CD8-positive, alpha-beta T cell (primary cell): ENCODE measurements at regions of chr1 and their contacts with region 1.

Region 1: DNA sequence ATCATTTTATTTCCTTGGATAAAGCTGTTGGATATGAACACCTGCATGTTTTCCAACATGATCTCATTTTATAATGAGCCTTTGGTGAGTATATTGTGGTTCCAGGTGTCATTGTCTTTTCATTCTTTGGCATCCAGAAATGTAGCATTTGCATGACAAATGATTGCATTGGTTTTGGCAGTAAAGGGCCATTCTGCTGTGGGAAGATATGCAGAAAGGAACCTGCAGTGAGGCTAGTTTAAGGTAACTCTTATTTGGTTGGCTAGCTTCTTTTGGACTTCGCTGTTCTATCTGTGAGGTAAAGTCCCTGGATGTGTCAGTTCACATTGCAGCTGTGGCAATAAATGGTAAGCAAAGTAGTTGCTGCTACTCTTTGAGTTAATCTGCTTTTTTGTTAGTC is 343.0 kb downstream of the AMY1C start:
- DNase-seq: no peak
- ATAC-seq: no peak
- H3K4me3 ChIP-seq: no peak overlapping the region
- H3K4me3 Mint-ChIP-seq: no peak overlapping the region
- H3K27ac ChIP-seq: no peak overlapping the region
- H3K27ac Mint-ChIP-seq: no peak overlapping the region
- H3K4me1 ChIP-seq: no peaks in the 10 kb centered on the region
- H3K4me1 Mint-ChIP-seq: no peaks in the 10 kb centered on the region
- H3K27me3 ChIP-seq: no peaks in the 10 kb centered on the region
- H3K27me3 Mint-ChIP-seq: no peaks in the 10 kb centered on the region
- CTCF ChIP-seq: no peak

Region 2: GRCh38 chr1:104105466-104105865 is 12.8 kb after region 1 on chr1:
- CTCF ChIA-PET with region 1: no interaction called
- POLR2A ChIA-PET with region 1: no interaction called
- intact Hi-C with region 1: loop called in 1 of 2 experiments (anchors 1 kb)
- DNase-seq: no peak
- ATAC-seq: no peak
- H3K4me3 ChIP-seq: no peak overlapping the region
- H3K4me3 Mint-ChIP-seq: no peak overlapping the region
- H3K27ac ChIP-seq: no peak overlapping the region
- H3K27ac Mint-ChIP-seq: no peak overlapping the region
- H3K4me1 ChIP-seq: no peaks in the 10 kb centered on the region
- H3K4me1 Mint-ChIP-seq: no peaks in the 10 kb centered on the region
- H3K27me3 ChIP-seq: no peaks in the 10 kb centered on the region
- H3K27me3 Mint-ChIP-seq: no peaks in the 10 kb centered on the region
- CTCF ChIP-seq: no peak

Region 3: GRCh38 chr1:104720741-104721140 is 628.0 kb after region 1 on chr1:
- CTCF ChIA-PET with region 1: no interaction called
- POLR2A ChIA-PET with region 1: no interaction called
- intact Hi-C with region 1: no loop called
- DNase-seq: no peak
- ATAC-seq: no peak
- H3K4me3 ChIP-seq: no peak overlapping the region
- H3K4me3 Mint-ChIP-seq: no peak overlapping the region
- H3K27ac ChIP-seq: no peak overlapping the region
- H3K27ac Mint-ChIP-seq: no peak overlapping the region
- H3K4me1 ChIP-seq: no peaks in the 10 kb centered on the region
- H3K4me1 Mint-ChIP-seq: no peaks in the 10 kb centered on the region
- H3K27me3 ChIP-seq: no peaks in the 10 kb centered on the region
- H3K27me3 Mint-ChIP-seq: no peaks in the 10 kb centered on the region
- CTCF ChIP-seq: no peak